Endothelial cell of umbilical vein (primary cell): ENCODE measurements at regions of chr1 and their contacts with region 1.

Region 1: DNA sequence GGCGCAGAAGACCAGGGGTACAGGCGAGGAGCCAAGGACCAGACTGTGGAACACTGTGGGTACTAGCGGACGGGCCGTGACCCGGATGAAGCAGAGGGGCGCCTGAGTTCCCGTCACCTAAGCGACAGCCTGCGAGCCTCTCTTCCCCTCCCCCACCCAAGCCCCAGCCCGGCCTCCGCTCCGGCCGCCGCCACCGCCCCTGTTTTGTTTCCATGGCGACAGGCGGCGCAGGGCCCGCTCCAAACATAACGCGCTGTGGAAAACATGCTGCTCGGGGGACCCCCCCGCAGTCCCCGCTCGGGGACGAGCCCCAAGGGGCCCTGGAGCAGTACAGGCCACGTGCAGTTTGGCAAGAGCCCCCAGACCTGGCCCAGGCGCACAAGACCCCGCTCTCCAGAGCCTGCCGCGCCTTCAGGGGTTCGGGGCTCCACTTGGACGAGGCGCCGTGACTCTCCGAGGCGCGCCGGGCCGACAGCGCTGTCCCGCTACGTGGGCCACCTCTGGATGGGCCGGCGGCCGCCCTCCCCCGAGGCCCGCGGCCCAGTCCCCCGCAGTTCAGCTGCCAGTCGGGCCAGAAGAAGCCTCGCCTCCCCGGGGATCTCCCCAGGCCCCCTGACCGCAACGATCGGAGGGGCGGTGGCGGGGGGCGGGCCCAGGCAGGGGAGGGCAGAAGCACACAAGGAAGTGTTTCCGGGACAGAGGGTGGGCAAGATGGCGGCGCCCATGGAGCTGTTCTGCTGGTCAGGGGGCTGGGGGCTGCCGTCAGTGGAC is at the start of gene MTX1:
- DNase-seq: peak; percentile 83
- H3K4me3 ChIP-seq: peak within 1 kb of the TSS; percentile 30 to 92 (median 82)
- H3K27ac ChIP-seq: peak within 1 kb of the TSS; percentile 87
- H3K4me1 ChIP-seq: peaks cover 21% of the 10 kb centered on the region
- H3K27me3 ChIP-seq: no peaks in the 10 kb centered on the region
- CTCF ChIP-seq: no peak
- POLR2A ChIP-seq: peak; percentile 71
- total RNA-seq, gene MTX1: 49.1 and 53.0 TPM in 2 replicates

Region 2: GRCh38 chr1:155193275-155193990 is 15.3 kb before region 1 on chr1:
- CTCF ChIA-PET with region 1: interaction called, 42 read pairs
- POLR2A ChIA-PET with region 1: no interaction called
- dilution Hi-C with region 1: no loop called
- intact Hi-C with region 1: loop called (anchors 2 kb)
- DNase-seq: peak; percentile 91
- H3K4me3 ChIP-seq: peak overlapping the region; percentile 30 to 37 (median 31)
- H3K27ac ChIP-seq: peak overlapping the region; percentile 1
- H3K4me1 ChIP-seq: peaks cover 13% of the 10 kb centered on the region
- H3K27me3 ChIP-seq: no peaks in the 10 kb centered on the region
- CTCF ChIP-seq: peak; percentile 98 to 99
- POLR2A ChIP-seq: peak; percentile 30

Region 3: GRCh38 chr1:155227261-155228095 is 18.8 kb after region 1 on chr1:
- CTCF ChIA-PET with region 1: interaction called, 69 read pairs
- POLR2A ChIA-PET with region 1: interaction called, 5 read pairs
- dilution Hi-C with region 1: no loop called
- intact Hi-C with region 1: loop called (anchors 1 kb)
- DNase-seq: peak; percentile 99
- H3K4me3 ChIP-seq: peak overlapping the region; percentile 41 to 82 (median 58)
- H3K27ac ChIP-seq: peak overlapping the region; percentile 63
- H3K4me1 ChIP-seq: peaks cover 31% of the 10 kb centered on the region
- H3K27me3 ChIP-seq: no peaks in the 10 kb centered on the region
- CTCF ChIP-seq: no peak
- POLR2A ChIP-seq: peak; percentile 96

Region 4: DNA sequence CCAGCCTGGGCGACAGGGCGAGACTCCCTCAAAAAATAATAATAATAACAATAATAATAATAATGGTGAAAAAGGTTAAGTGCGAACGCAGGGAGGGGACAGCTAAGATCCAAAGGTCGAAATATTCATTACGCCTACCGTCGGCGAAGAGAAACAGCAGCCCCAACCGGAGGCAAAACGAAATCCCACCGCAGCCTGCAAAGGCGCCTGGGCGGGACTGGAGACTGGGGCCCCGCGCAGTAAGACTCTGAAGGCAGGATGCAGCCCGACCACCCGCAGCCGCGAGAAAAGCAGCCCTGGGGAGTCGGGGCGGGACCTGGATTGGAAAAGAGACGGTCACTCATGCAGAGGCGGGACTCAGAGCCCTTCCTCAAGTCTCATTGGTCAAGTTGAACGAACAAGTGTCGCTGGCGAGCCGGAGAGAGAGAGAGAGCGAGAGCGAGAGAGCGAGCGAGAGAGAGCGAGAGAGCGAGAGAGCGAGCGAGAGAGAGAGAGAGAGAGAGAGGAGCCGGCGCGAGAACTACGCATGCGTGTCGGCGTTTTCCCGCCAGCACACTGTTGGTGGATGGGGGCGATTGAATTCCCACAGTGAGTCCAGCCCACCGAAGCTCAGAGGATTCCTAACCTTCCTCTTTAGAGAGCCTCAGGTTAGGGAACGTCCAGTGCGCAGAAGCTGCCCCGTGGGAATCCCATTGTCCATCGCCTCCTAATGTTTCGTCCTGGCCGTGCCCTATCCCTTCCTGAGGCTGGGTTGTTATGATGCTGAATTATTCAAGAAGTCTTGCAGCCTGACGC is 35.8 kb after region 1 on chr1:
- CTCF ChIA-PET with region 1: interaction called, 17 read pairs
- POLR2A ChIA-PET with region 1: no interaction called
- dilution Hi-C with region 1: no loop called
- intact Hi-C with region 1: loop called (anchors 1 kb)
- DNase-seq: peak; percentile 99
- H3K4me3 ChIP-seq: peak overlapping the region; percentile 48 to 61 (median 60)
- H3K27ac ChIP-seq: peak overlapping the region; percentile 41
- H3K4me1 ChIP-seq: peaks cover 16% of the 10 kb centered on the region
- H3K27me3 ChIP-seq: no peaks in the 10 kb centered on the region
- CTCF ChIP-seq: peak; percentile 8 to 17
- POLR2A ChIP-seq: peak; percentile 99

Region 5: GRCh38 chr1:155308493-155309422 is 100.0 kb after region 1 on chr1 and contains the start of gene FDPS:
- CTCF ChIA-PET with region 1: no interaction called
- POLR2A ChIA-PET with region 1: no interaction called
- dilution Hi-C with region 1: no loop called
- intact Hi-C with region 1: loop called (anchors 2 kb)
- DNase-seq: peak; percentile 99
- H3K4me3 ChIP-seq: peak within 1 kb of the TSS; percentile 47 to 86 (median 84)
- H3K27ac ChIP-seq: peak within 1 kb of the TSS; percentile 88
- H3K4me1 ChIP-seq: peaks cover 24% of the 10 kb centered on the region
- H3K27me3 ChIP-seq: no peaks in the 10 kb centered on the region
- CTCF ChIP-seq: no peak
- POLR2A ChIP-seq: peak; percentile 87
- total RNA-seq, gene FDPS: 630 and 670 TPM in 2 replicates

Region 6: GRCh38 chr1:155360051-155360450 is 151.3 kb after region 1 on chr1:
- CTCF ChIA-PET with region 1: no interaction called
- POLR2A ChIA-PET with region 1: no interaction called
- dilution Hi-C with region 1: no loop called
- intact Hi-C with region 1: no loop called
- DNase-seq: no peak
- H3K4me3 ChIP-seq: no peak overlapping the region
- H3K27ac ChIP-seq: no peak overlapping the region
- H3K4me1 ChIP-seq: no peaks in the 10 kb centered on the region
- H3K27me3 ChIP-seq: no peaks in the 10 kb centered on the region
- CTCF ChIP-seq: no peak
- POLR2A ChIP-seq: no peak

Region 7: DNA sequence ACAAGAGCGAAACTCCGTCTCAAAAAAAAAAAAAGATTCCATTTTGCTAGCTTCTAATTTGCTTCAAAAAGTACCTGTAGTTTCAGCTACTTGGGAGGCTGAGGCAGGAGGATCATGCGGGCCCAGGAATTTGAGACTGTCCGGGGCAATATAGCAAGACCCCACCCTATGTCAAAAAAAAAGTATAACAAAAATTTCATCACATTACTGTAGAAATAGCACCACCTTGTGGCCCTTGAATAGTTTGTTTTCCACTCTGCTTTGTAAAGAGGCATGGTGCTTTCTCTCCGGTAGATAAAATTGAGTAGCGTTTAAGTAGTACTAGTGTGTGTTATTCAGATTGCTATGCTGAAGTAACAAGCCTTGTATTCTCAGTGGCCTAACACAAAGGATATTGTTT is 383.0 kb after region 1 on chr1:
- CTCF ChIA-PET with region 1: interaction called, 4 read pairs
- POLR2A ChIA-PET with region 1: no interaction called
- dilution Hi-C with region 1: no loop called
- intact Hi-C with region 1: loop called (anchors 5 kb)
- DNase-seq: peak; percentile 65
- H3K4me3 ChIP-seq: no peak overlapping the region
- H3K27ac ChIP-seq: no peak overlapping the region
- H3K4me1 ChIP-seq: no peaks in the 10 kb centered on the region
- H3K27me3 ChIP-seq: no peaks in the 10 kb centered on the region
- CTCF ChIP-seq: peak; percentile 20 to 28
- POLR2A ChIP-seq: no peak